T-cell (primary cell): ENCODE measurements at regions of chr17 and their contacts with region 1.

Region 1: DNA sequence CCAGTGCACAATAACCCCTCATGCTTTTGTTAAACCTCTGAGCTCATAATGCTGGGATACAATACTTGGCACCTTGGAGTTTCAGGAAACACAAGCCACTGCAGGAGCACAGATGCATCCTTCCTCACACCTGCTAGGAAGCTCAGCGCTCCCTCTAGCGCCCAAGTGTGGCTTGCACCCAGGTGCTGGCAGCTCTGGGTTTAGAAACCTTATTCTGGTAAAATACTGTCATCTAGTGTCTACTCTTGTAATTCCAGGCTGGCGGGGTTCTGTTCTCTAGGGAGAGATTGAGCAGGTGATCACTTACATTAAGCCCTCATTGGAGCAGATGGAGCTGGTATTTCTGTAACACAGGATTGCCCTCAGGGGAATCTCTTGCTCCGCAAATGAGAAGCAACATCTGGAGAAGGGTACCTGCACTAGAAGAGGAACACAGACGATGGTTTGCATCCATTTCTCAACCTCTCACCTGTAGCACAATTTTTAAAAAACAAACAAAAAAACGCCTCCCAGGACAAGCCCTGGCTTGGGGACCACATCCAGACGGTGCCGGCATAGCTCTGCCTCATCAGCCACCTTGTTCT is 1.5 kb downstream of the CCL1 start:
- DNase-seq: peak in 34 of 35 experiments; percentile 12 to 69 (median 44)
- ATAC-seq: peak; percentile 58 to 73 (median 65)
- H3K4me3 ChIP-seq: no peak overlapping the region
- H3K4me3 Mint-ChIP-seq: no peak overlapping the region
- H3K27ac ChIP-seq: no peak overlapping the region
- H3K27ac Mint-ChIP-seq: no peak overlapping the region
- H3K4me1 ChIP-seq: peaks cover 0 to 5% of the 10 kb centered on the region in 2 experiments
- H3K4me1 Mint-ChIP-seq: peaks cover 9 to 10% (median 9%) of the 10 kb centered on the region in 3 donors
- H3K27me3 ChIP-seq: peaks cover 0 to 14% of the 10 kb centered on the region in 2 experiments
- H3K27me3 Mint-ChIP-seq: peaks cover 6 to 25% of the 10 kb centered on the region in 2 donors

Region 2: GRCh38 chr17:34199932-34200534 is 161.5 kb before region 1 on chr17:
- CTCF ChIA-PET with region 1: interaction called, 14 to 23 read pairs
- POLR2A ChIA-PET with region 1: no interaction called
- DNase-seq: peak; percentile 19 to 85 (median 54)
- ATAC-seq: peak; percentile 76 to 88 (median 81)
- H3K4me3 ChIP-seq: no peak overlapping the region
- H3K4me3 Mint-ChIP-seq: no peak overlapping the region
- H3K27ac ChIP-seq: no peak overlapping the region
- H3K27ac Mint-ChIP-seq: no peak overlapping the region
- H3K4me1 ChIP-seq: no peaks in the 10 kb centered on the region
- H3K4me1 Mint-ChIP-seq: peaks cover 0 to 5% (median 4%) of the 10 kb centered on the region in 3 donors
- H3K27me3 ChIP-seq: peaks cover 0 to 9% of the 10 kb centered on the region in 2 experiments
- H3K27me3 Mint-ChIP-seq: peaks cover 32 to 34% of the 10 kb centered on the region in 2 donors

Region 3: GRCh38 chr17:34235389-34236028 is 126.1 kb before region 1 on chr17:
- CTCF ChIA-PET with region 1: no interaction called
- POLR2A ChIA-PET with region 1: no interaction called
- DNase-seq: no peak
- ATAC-seq: no peak
- H3K4me3 ChIP-seq: no peak overlapping the region
- H3K4me3 Mint-ChIP-seq: no peak overlapping the region
- H3K27ac ChIP-seq: no peak overlapping the region
- H3K27ac Mint-ChIP-seq: no peak overlapping the region
- H3K4me1 ChIP-seq: no peaks in the 10 kb centered on the region
- H3K4me1 Mint-ChIP-seq: peaks cover 0 to 4% (median 0%) of the 10 kb centered on the region in 3 donors
- H3K27me3 ChIP-seq: peaks cover 0 to 18% of the 10 kb centered on the region in 2 experiments
- H3K27me3 Mint-ChIP-seq: peaks cover 16 to 30% of the 10 kb centered on the region in 2 donors

Region 4: GRCh38 chr17:34451313-34451712 is 89.7 kb after region 1 on chr17:
- CTCF ChIA-PET with region 1: no interaction called
- POLR2A ChIA-PET with region 1: no interaction called
- DNase-seq: no peak
- ATAC-seq: no peak
- H3K4me3 ChIP-seq: no peak overlapping the region
- H3K4me3 Mint-ChIP-seq: no peak overlapping the region
- H3K27ac ChIP-seq: no peak overlapping the region
- H3K27ac Mint-ChIP-seq: no peak overlapping the region
- H3K4me1 ChIP-seq: no peaks in the 10 kb centered on the region
- H3K4me1 Mint-ChIP-seq: no peaks in the 10 kb centered on the region
- H3K27me3 ChIP-seq: peaks cover 4 to 26% of the 10 kb centered on the region in 2 experiments
- H3K27me3 Mint-ChIP-seq: peaks cover 42 to 52% of the 10 kb centered on the region in 2 donors

Region 5: GRCh38 chr17:34503528-34504145 is 142.1 kb after region 1 on chr17:
- CTCF ChIA-PET with region 1: no interaction called
- POLR2A ChIA-PET with region 1: no interaction called
- DNase-seq: no peak
- ATAC-seq: no peak
- H3K4me3 ChIP-seq: no peak overlapping the region
- H3K4me3 Mint-ChIP-seq: no peak overlapping the region
- H3K27ac ChIP-seq: no peak overlapping the region
- H3K27ac Mint-ChIP-seq: no peak overlapping the region
- H3K4me1 ChIP-seq: no peaks in the 10 kb centered on the region
- H3K4me1 Mint-ChIP-seq: no peaks in the 10 kb centered on the region
- H3K27me3 ChIP-seq: peaks cover 2 to 19% of the 10 kb centered on the region in 2 experiments
- H3K27me3 Mint-ChIP-seq: peaks cover 31 to 43% of the 10 kb centered on the region in 2 donors